ENCODE measurements at regions of chr13 and their contacts with region 1.

Region 1: DNA sequence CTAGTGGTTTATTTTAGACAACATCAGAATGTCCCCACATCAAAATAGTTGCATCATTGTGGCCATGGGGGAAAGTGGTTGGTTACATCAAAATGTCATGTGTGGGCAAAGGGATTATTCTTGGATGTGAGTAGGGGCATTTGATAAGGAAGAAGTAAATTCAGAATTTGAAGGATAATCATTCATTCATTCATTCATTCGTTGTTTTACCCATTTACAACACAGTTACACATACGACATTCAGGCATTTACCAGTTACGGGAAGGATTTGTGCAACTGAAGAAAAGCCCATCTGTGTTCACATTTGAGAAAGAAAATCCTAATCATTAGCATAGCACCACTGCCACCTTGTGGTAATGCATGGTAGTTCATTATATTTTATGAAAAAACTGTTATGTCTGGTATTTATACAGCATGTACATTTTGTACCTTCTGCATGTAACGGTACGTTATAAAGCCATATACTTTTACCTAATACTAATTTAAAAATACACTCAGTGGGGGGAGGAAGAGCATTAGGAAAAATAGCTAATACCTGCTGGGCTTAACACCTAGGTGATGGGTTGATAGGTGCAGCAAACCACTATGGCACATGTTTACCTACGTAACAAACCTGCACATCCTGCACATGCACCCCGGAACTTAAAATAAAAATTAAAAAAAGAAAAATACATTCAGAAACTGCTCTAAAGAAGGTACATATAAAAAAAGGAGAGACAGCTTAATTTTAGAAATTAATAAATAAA is 62.1 kb downstream of the DGKH start:
- DNase-seq: peak in 1 of 2 donors; percentile 83
- ATAC-seq: peak; percentile 78 to 84 (median 82)
- H3K4me3 ChIP-seq: no peak overlapping the region
- H3K4me3 Mint-ChIP-seq: no peak overlapping the region
- H3K27ac ChIP-seq: no peak overlapping the region
- H3K27ac Mint-ChIP-seq: no peak overlapping the region
- H3K4me1 ChIP-seq: no peaks in the 10 kb centered on the region
- H3K4me1 Mint-ChIP-seq: no peaks in the 10 kb centered on the region
- H3K27me3 ChIP-seq: no peaks in the 10 kb centered on the region
- H3K27me3 Mint-ChIP-seq: peaks cover 11 to 22% of the 10 kb centered on the region in 2 donors
- CTCF ChIP-seq: peak; percentile 90

Region 2: GRCh38 chr13:41054212-41054877 is 1056.2 kb before region 1 on chr13:
- intact Hi-C with region 1: loop called (anchors 2 kb)
- DNase-seq: peak in 1 of 2 donors; percentile 82
- ATAC-seq: peak; percentile 71 to 76 (median 75)
- H3K4me3 ChIP-seq: no peak overlapping the region
- H3K4me3 Mint-ChIP-seq: no peak overlapping the region
- H3K27ac ChIP-seq: no peak overlapping the region
- H3K27ac Mint-ChIP-seq: no peak overlapping the region
- H3K4me1 ChIP-seq: peaks cover 3% of the 10 kb centered on the region
- H3K4me1 Mint-ChIP-seq: peaks cover 16 to 40% of the 10 kb centered on the region in 2 donors
- H3K27me3 ChIP-seq: no peaks in the 10 kb centered on the region
- H3K27me3 Mint-ChIP-seq: no peaks in the 10 kb centered on the region
- CTCF ChIP-seq: peak; percentile 67

Region 3: GRCh38 chr13:41352935-41353840 is 757.4 kb before region 1 on chr13:
- intact Hi-C with region 1: loop called (anchors 1 kb)
- DNase-seq: peak; percentile 21 to 85
- ATAC-seq: peak; percentile 75 to 80 (median 75)
- H3K4me3 ChIP-seq: no peak overlapping the region
- H3K4me3 Mint-ChIP-seq: peak overlapping the region; percentile 42
- H3K27ac ChIP-seq: no peak overlapping the region
- H3K27ac Mint-ChIP-seq: peak overlapping the region; percentile 35 to 83
- H3K4me1 ChIP-seq: peaks cover 12% of the 10 kb centered on the region
- H3K4me1 Mint-ChIP-seq: peaks cover 30 to 32% of the 10 kb centered on the region in 2 donors
- H3K27me3 ChIP-seq: no peaks in the 10 kb centered on the region
- H3K27me3 Mint-ChIP-seq: no peaks in the 10 kb centered on the region
- CTCF ChIP-seq: peak; percentile 90

Region 4: DNA sequence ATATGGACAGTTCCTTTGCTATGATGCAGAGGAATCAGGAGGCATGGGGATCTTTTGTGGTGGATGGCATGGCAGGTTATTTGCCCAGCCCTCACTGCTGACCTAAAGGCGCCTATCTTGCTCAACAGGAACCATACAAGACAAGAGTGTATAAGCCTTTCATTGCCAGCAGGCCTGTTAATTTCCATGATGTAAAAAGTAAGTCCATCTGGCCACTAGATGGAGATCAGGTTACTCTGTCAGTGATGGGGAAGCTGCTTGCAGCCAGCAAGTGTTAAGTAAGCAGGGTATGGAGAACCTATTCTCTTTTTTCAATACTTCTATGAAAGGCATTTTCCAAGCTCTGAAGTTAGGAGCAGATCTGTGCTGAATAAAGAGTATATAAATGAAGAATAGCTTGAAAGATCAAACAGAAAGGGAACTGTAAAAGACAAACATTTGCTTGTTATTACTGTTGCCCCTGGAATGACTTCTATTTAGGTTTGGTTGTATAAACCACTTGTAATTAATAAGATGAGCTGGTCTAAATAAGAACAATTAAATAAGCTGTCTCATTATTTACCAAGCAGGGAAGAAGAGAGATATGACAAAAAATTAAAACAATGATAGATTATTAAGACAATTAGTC is 442.3 kb before region 1 on chr13:
- intact Hi-C with region 1: loop called (anchors 1 kb)
- DNase-seq: peak in 1 of 2 donors; percentile 71
- ATAC-seq: peak; percentile 75 to 83 (median 80)
- H3K4me3 ChIP-seq: no peak overlapping the region
- H3K4me3 Mint-ChIP-seq: no peak overlapping the region
- H3K27ac ChIP-seq: no peak overlapping the region
- H3K27ac Mint-ChIP-seq: no peak overlapping the region
- H3K4me1 ChIP-seq: no peaks in the 10 kb centered on the region
- H3K4me1 Mint-ChIP-seq: no peaks in the 10 kb centered on the region
- H3K27me3 ChIP-seq: no peaks in the 10 kb centered on the region
- H3K27me3 Mint-ChIP-seq: no peaks in the 10 kb centered on the region
- CTCF ChIP-seq: peak; percentile 73

Region 5: DNA sequence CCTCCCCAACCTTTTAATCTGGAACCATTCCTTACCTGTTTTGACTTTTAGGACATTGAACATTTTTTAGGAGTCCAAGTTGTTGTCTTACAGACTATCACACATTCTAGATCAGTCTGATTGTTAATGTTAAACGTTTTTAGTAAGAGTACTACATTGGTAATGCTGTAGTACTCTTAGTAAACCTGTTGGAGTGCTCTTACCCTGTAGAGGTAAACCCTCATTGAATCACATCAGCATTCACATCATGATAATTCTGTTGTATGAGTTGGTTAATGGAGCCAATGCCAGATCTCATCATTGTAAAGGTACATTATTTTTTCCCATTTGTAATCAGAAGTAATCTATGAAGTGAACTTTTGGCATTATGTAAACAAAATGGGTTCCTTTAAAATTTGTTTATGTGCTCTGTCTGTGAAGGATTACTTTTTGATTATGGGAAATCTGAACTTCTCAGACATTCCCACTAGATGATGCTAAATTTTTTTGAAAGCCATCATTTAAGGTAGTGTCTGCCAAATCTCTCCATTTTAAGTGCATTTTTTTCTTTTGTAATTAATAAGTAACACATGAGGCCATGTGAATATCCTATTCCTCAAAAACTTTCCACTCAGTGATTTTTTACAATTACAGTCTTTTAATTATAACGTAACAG is 204.9 kb before region 1 on chr13:
- intact Hi-C with region 1: loop called (anchors 2 kb)
- DNase-seq: peak in 1 of 2 donors; percentile 59
- ATAC-seq: peak; percentile 79 to 84 (median 80)
- H3K4me3 ChIP-seq: no peak overlapping the region
- H3K4me3 Mint-ChIP-seq: no peak overlapping the region
- H3K27ac ChIP-seq: no peak overlapping the region
- H3K27ac Mint-ChIP-seq: no peak overlapping the region
- H3K4me1 ChIP-seq: no peaks in the 10 kb centered on the region
- H3K4me1 Mint-ChIP-seq: peaks cover 0 to 4% of the 10 kb centered on the region in 2 donors
- H3K27me3 ChIP-seq: no peaks in the 10 kb centered on the region
- H3K27me3 Mint-ChIP-seq: no peaks in the 10 kb centered on the region
- CTCF ChIP-seq: peak; percentile 52